ENCODE measurements at regions of chr10 and their contacts with region 1.

Region 1: DNA sequence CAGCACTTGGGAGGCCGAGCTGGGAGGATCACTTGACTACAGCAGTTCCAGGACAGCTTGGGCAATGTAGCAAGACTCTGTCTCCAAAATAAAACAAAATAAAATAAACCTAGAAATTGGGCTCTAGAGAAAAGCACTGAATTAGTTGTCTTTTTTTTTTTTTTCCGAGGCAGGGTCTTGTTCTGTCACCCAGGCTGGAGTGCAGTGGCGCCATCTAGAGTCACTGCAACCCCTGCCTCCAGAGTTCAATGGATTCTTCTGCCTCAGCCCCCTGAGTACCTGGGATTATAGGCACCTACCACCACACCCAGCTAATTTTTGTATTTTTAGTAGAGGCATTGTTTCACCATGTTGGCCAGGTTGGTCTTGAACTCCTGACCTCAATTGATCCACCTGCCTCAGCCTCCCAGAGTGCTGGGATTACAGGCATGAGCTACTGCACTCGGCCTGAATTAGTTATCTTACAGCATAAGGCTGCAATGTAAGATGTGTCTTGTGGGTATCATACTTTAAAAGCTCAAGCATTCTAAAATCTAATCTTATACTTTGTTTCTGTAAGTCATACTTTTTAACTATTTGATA is 12.8 kb downstream of the MEIG1 start:
- DNase-seq: no peak
- H3K4me3 ChIP-seq: no peak overlapping the region
- H3K27ac ChIP-seq: no peak overlapping the region
- H3K4me1 ChIP-seq: no peaks in the 10 kb centered on the region
- H3K27me3 ChIP-seq: no peaks in the 10 kb centered on the region
- CTCF ChIP-seq: peak; percentile 49

Region 2: DNA sequence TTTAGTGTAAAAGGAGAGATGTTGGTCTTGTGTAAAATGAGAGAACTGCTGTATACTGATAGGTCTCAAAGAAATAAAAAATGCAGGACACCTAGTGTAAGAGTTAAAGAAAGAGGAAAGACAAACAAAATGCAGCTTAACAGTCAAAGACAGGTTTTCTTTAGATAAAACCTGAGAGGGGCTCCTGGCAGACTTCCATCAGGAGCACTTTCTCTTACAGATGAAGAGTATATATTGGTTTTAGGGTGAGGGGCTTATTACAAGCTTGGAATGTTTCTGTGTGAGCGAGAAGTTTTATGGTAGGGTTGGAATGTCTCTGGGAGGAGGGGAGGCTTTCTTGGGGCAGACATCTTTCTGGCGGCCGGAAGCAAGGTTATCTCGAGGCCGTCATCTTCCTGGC is 100.4 kb after region 1 on chr10:
- intact Hi-C with region 1: loop called (anchors 10 kb)
- DNase-seq: no peak
- H3K4me3 ChIP-seq: no peak overlapping the region
- H3K27ac ChIP-seq: no peak overlapping the region
- H3K4me1 ChIP-seq: no peaks in the 10 kb centered on the region
- H3K27me3 ChIP-seq: no peaks in the 10 kb centered on the region
- CTCF ChIP-seq: no peak

Measured in colonic mucosa (tissue), 4 donors.